Activated CD4-positive, alpha-beta memory T cell treated with anti-CD3 and anti-CD28 coated beads, Interleukin-2, amount 10 ng/mL, durations not matched to agents 7 days and 5 days (primary cell): ENCODE measurements at regions of chr12 and their contacts with region 1.

Region 1: GRCh38 chr12:93569656-93570551 is 2.6 kb upstream of the SOCS2 start:
- DNase-seq: peak; percentile 82
- H3K4me3 Mint-ChIP-seq: peak overlapping the region; percentile 83
- H3K27ac Mint-ChIP-seq: peak overlapping the region; percentile 90
- H3K4me1 Mint-ChIP-seq: peaks cover 36% of the 10 kb centered on the region
- H3K27me3 Mint-ChIP-seq: peaks cover 2% of the 10 kb centered on the region

Region 2: DNA sequence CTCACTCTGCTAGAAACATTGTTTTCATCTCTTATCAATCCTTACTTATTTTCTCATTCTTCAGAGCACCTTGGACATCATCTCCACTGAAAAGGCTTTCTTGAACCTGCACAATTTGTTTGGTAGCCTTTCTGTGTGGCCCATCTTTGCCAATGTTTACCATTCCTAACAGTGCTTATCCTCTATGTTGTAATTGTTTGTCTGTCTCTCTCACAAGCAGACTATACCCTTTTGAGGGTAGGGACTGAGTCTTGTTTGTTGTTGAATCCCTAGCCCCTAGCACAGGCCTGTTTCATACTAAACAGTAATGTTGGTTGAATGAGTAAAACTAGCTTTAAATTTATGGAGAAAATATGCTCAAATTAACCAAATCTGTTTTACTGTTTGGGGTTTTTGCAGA is 93.3 kb before region 1 on chr12:
- CTCF ChIA-PET with region 1: no interaction called
- POLR2A ChIA-PET with region 1: no interaction called
- DNase-seq: no peak
- H3K4me3 Mint-ChIP-seq: no peak overlapping the region
- H3K27ac Mint-ChIP-seq: no peak overlapping the region
- H3K4me1 Mint-ChIP-seq: peaks cover 3% of the 10 kb centered on the region
- H3K27me3 Mint-ChIP-seq: no peaks in the 10 kb centered on the region

Region 3: GRCh38 chr12:93591137-93591868 is 21.4 kb after region 1 on chr12:
- CTCF ChIA-PET with region 1: interaction called, 6 read pairs
- POLR2A ChIA-PET with region 1: interaction called, 18 read pairs
- DNase-seq: peak; percentile 52
- H3K4me3 Mint-ChIP-seq: peak overlapping the region; percentile 87
- H3K27ac Mint-ChIP-seq: peak overlapping the region; percentile 61
- H3K4me1 Mint-ChIP-seq: peaks cover 51% of the 10 kb centered on the region
- H3K27me3 Mint-ChIP-seq: peaks cover 32% of the 10 kb centered on the region

Region 4: GRCh38 chr12:93677195-93678064 is 107.5 kb after region 1 on chr12 and contains the start of gene CRADD:
- CTCF ChIA-PET with region 1: interaction called, 7 read pairs
- POLR2A ChIA-PET with region 1: interaction called, 13 read pairs
- DNase-seq: peak; percentile 87
- H3K4me3 Mint-ChIP-seq: peak within 1 kb of the TSS; percentile 88
- H3K27ac Mint-ChIP-seq: peak within 1 kb of the TSS; percentile 99
- H3K4me1 Mint-ChIP-seq: peaks cover 40% of the 10 kb centered on the region
- H3K27me3 Mint-ChIP-seq: peaks cover 6% of the 10 kb centered on the region
- total RNA-seq, gene CRADD: 12.7 to 14.1 TPM

Region 5: DNA sequence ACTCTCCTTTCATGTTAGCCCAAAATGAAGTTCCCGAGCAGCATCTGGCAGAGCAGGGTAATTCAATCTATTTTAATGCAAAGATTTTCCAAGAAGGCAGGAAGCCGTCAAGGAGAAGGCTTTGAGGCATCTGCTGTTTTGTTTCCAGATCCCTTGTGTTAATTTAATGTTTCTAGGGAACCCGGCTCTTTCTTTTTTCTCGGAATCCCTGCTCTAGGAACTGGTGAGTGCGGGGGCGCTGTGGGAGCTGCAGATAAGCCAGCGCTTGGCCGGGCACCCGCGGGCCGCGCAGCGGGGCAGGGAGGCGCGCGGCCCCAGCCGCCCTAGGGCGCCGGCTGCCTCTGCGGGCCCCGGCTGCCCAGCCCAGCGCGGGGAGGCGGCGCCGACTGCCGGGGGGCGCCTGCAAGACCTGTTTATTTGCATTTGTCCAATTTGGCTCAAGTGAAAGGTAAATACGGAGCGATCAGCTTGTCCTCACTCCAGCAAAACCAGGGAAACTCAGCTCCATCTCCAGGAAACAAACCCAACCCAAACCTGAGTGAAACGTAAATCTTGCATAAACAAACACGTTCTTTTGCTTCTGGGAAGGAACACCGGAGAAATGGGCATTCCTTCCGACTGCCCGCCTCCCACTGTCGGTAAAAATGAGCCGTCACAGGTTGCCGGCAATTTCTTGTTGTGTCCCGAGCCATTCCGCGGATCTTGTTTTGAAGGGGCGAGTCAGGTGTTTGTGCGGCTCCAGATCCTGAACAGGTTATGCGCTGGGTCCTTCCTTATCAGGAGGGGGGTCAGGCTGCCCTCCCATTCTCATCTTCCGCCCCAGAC is 172.4 kb after region 1 on chr12:
- CTCF ChIA-PET with region 1: interaction called, 8 read pairs
- POLR2A ChIA-PET with region 1: interaction called, 11 read pairs
- DNase-seq: peak; percentile 70
- H3K4me3 Mint-ChIP-seq: peak overlapping the region; percentile 86
- H3K27ac Mint-ChIP-seq: peak overlapping the region; percentile 93
- H3K4me1 Mint-ChIP-seq: peaks cover 34% of the 10 kb centered on the region
- H3K27me3 Mint-ChIP-seq: no peaks in the 10 kb centered on the region

Region 6: GRCh38 chr12:93766796-93767523 is 197.1 kb after region 1 on chr12:
- CTCF ChIA-PET with region 1: interaction called, 18 read pairs
- POLR2A ChIA-PET with region 1: interaction called, 24 read pairs
- DNase-seq: peak; percentile 57
- H3K4me3 Mint-ChIP-seq: peak overlapping the region; percentile 5
- H3K27ac Mint-ChIP-seq: peak overlapping the region; percentile 75
- H3K4me1 Mint-ChIP-seq: peaks cover 42% of the 10 kb centered on the region
- H3K27me3 Mint-ChIP-seq: no peaks in the 10 kb centered on the region